Activated CD8-positive, alpha-beta T cell treated with anti-CD3 and anti-CD28 coated beads, Interleukin-2, amount 10 ng/mL, durations not matched to agents 7 days and 5 days (primary cell): ENCODE measurements at regions of chr1 and their contacts with region 1.

Region 1: DNA sequence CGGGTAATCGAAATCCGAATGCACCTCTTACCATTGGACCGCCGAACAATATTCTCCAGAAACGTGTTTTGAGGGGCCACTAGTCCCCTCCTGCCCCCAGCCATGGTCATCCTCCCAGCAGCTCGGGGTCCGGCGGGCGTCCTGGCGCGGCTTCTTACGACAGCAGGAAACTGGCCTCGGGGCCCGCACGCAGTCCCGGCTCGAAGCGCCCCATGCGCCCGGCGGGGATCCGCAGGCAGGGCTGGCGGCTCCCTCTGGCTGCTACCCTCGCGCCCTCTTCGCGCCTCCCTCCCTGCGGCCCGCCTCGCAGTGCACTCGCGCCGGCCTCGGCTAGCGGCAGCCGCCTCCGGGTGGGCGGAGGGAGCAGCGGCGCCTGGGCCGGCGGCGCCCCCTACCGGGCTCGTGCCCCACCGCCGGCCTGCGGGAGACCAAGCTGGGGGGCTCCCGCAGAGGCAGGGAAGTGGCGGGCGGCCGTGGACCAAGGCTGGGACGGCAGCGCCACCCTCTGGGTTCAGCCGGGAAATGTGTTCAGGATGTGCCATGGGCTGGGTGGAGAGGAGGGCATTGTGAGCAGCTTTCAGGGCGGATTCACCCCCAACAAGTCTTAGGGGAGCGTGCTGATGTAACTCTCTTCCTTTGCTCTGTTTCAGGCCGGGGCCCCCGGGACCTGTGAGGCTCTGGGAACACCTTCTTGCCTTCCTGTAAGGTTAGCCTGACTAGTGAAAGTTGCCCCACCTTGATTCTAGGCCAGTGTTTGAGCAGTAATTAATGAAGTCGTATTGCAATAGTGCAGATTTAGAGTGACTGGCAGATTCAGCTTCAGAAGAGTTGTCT is at the start of gene KCNH1:
- DNase-seq: peak; percentile 85
- ATAC-seq: peak; percentile 96
- H3K4me3 Mint-ChIP-seq: peak within 1 kb of the TSS; percentile 40
- H3K27ac Mint-ChIP-seq: no peak within 1 kb of the TSS
- H3K4me1 Mint-ChIP-seq: peaks cover 10% of the 10 kb centered on the region
- H3K27me3 Mint-ChIP-seq: peaks cover 63% of the 10 kb centered on the region
- total RNA-seq, gene KCNH1: not detected

Region 2: GRCh38 chr1:210407207-210407886 is 726.7 kb before region 1 on chr1:
- CTCF ChIA-PET with region 1: interaction called, 27 read pairs
- POLR2A ChIA-PET with region 1: no interaction called
- DNase-seq: peak; percentile 79
- ATAC-seq: peak; percentile 81
- H3K4me3 Mint-ChIP-seq: no peak overlapping the region
- H3K27ac Mint-ChIP-seq: no peak overlapping the region
- H3K4me1 Mint-ChIP-seq: no peaks in the 10 kb centered on the region
- H3K27me3 Mint-ChIP-seq: peaks cover 3% of the 10 kb centered on the region

Region 3: DNA sequence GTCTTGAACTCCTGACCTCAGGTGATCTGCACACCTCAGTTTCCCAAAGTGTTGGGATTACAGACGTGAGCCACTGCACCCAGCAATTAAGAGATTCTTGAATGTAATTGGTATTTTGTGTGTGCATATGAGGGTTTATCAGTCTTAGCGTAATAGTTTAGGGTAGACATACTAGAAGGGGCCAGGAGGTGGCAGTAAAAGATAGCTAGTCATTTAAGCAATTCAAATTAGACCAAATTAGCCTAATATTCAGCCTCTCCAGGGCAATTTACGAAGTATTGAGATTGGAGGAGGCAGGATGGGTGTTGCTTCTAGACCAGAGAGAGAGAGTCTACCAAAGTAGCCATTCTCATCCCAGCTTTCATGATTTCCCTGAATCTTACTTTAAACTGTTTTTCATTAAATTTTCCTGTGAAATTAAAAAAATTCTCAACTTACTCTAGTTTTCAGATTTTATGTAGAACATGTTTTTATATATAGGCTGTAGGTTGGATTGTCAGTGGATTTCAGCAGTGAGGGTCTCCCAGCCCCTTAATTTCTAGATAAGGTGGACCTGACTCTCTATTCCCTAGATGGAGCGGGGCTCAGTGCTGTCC is 685.7 kb before region 1 on chr1:
- CTCF ChIA-PET with region 1: interaction called, 44 read pairs
- POLR2A ChIA-PET with region 1: no interaction called
- DNase-seq: peak; percentile 49
- ATAC-seq: no peak
- H3K4me3 Mint-ChIP-seq: no peak overlapping the region
- H3K27ac Mint-ChIP-seq: no peak overlapping the region
- H3K4me1 Mint-ChIP-seq: peaks cover 18% of the 10 kb centered on the region
- H3K27me3 Mint-ChIP-seq: peaks cover 2% of the 10 kb centered on the region

Region 4: GRCh38 chr1:210584439-210585113 is 549.5 kb before region 1 on chr1:
- CTCF ChIA-PET with region 1: interaction called, 95 read pairs
- POLR2A ChIA-PET with region 1: no interaction called
- DNase-seq: peak; percentile 83
- ATAC-seq: peak; percentile 90
- H3K4me3 Mint-ChIP-seq: no peak overlapping the region
- H3K27ac Mint-ChIP-seq: no peak overlapping the region
- H3K4me1 Mint-ChIP-seq: peaks cover 16% of the 10 kb centered on the region
- H3K27me3 Mint-ChIP-seq: peaks cover 3% of the 10 kb centered on the region

Region 5: DNA sequence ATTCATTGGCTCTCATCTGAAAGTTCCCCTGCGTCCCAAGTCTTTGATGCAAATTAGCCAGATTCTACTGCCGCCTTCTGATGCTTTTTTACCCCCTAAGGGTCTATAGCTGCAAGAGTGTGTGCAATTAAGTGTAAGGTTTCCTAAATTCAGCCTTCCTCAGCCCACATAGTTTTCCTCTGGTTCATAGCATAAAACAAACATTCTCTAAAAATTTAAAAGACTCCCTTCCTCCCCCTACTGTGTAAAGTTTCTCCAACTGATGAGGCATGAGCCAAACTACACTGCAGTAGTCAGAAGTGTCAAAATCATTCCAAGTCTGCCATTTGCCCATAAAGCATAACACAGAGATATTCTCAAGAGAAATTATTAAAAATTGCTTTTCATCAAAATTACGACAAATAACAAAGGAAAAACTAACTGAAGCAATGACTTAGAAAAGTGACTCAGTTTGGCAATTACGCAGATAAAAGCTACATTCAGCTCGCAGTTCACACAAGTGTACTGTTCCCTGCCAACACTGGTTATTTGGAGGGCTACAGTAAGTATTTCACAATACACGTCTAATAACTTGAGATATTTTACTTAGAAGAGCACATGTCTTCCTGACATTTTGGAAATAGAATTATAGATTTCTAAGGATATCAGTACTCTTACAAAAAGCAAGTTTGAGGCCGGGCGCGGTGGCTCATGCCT is 15.5 kb before region 1 on chr1:
- CTCF ChIA-PET with region 1: interaction called, 13 read pairs
- POLR2A ChIA-PET with region 1: no interaction called
- DNase-seq: no peak
- ATAC-seq: no peak
- H3K4me3 Mint-ChIP-seq: no peak overlapping the region
- H3K27ac Mint-ChIP-seq: no peak overlapping the region
- H3K4me1 Mint-ChIP-seq: no peaks in the 10 kb centered on the region
- H3K27me3 Mint-ChIP-seq: peaks cover 14% of the 10 kb centered on the region

Region 6: DNA sequence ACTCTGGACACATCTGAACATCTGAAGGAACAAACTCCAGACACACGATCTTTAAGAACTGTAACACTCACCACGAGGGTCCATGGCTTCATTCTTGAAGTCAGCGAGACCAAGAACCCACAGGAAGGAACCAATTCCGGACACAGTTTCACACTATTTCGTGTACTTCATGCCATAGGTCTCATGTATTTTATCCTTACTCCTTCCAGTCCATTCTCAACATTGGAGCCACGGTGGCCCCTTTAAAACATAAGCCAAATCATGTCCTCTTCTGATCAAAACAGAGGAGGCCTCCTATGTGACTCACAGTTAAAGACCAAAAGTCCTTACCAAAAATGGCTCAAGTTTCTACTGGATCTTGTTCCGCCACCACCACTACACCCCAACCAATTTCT is 95.3 kb after region 1 on chr1:
- CTCF ChIA-PET with region 1: no interaction called
- POLR2A ChIA-PET with region 1: no interaction called
- DNase-seq: no peak
- ATAC-seq: peak; percentile 78
- H3K4me3 Mint-ChIP-seq: peak overlapping the region; percentile 36
- H3K27ac Mint-ChIP-seq: peak overlapping the region; percentile 86
- H3K4me1 Mint-ChIP-seq: peaks cover 25% of the 10 kb centered on the region
- H3K27me3 Mint-ChIP-seq: no peaks in the 10 kb centered on the region

Region 7: GRCh38 chr1:211258756-211259637 is 124.9 kb after region 1 on chr1 and contains the start of gene RCOR3:
- CTCF ChIA-PET with region 1: interaction called, 11 read pairs
- POLR2A ChIA-PET with region 1: no interaction called
- DNase-seq: peak; percentile 94
- ATAC-seq: peak; percentile 84
- H3K4me3 Mint-ChIP-seq: peak within 1 kb of the TSS; percentile 85
- H3K27ac Mint-ChIP-seq: peak within 1 kb of the TSS; percentile 91
- H3K4me1 Mint-ChIP-seq: peaks cover 16% of the 10 kb centered on the region
- H3K27me3 Mint-ChIP-seq: no peaks in the 10 kb centered on the region
- total RNA-seq, gene RCOR3: 47.2 to 50.6 TPM